CD8-positive, alpha-beta T cell (primary cell): ENCODE measurements at regions of chr5 and their contacts with region 1.

Region 1: GRCh38 chr5:132495667-132496190 is 5.2 kb upstream of the IRF1 start:
- DNase-seq: peak in 8 of 9 experiments; percentile 54 to 86 (median 70)
- ATAC-seq: peak; percentile 32
- H3K4me3 ChIP-seq: peak overlapping the region; percentile 67 to 86
- H3K4me3 Mint-ChIP-seq: peak overlapping the region; percentile 97
- H3K27ac ChIP-seq: peak overlapping the region; percentile 68 to 86
- H3K27ac Mint-ChIP-seq: peak overlapping the region; percentile 94
- H3K4me1 ChIP-seq: peaks cover 69% of the 10 kb centered on the region
- H3K4me1 Mint-ChIP-seq: peaks cover 69% of the 10 kb centered on the region
- H3K27me3 ChIP-seq: no peaks in the 10 kb centered on the region
- H3K27me3 Mint-ChIP-seq: no peaks in the 10 kb centered on the region
- CTCF ChIP-seq: no peak

Region 2: DNA sequence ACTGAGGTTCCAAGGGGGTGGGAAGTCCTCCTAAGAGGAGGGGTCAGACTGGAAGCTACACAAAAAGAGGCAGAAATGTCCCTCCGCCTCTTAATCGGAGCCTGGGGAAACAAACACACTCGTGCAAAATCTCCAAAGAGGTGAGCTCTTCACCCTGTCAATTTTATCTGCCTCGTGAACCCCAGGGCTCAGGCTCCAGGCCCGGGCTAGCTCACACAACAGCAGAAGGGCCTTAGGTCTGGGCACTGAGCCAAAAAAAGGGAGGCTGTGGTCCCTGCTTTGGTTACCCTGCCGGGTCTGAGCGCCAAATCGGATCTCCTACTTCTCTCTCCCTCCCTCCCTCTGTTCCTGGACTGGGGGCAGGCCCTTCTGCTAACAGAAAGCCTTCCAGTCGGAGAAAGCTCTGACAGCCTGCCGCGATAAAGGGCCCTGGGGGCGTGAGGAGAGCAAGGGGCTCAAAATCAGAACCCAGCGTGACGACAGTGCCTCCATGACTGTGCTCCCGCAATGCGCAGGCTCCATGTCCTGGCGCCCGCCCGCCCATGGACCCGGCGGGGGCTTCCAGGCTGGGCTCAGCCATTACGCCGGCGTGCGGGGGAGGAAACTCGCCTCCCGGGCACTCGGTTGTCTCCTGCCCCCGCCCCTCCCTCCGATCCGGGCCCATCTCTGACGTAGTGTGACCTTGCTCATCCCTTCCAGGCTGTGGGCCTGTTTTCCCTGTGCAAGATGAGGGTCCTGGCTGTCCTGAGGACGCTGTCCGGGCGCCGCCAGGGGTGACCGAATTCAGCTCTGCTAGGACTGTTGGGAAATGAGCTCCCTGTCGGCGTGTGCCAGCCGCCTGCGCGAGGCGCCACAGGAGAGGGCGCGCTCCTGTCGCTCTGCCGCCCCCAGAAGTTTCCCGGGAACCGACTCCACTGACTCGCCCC is 202.4 kb before region 1 on chr5:
- CTCF ChIA-PET with region 1: no interaction called
- POLR2A ChIA-PET with region 1: interaction called, 3 read pairs
- intact Hi-C with region 1: loop called in 1 of 2 experiments (anchors 5 kb)
- DNase-seq: peak; percentile 24 to 82 (median 63)
- ATAC-seq: peak; percentile 53
- H3K4me3 ChIP-seq: peak overlapping the region; percentile 76 to 87
- H3K4me3 Mint-ChIP-seq: peak overlapping the region; percentile 90
- H3K27ac ChIP-seq: peak overlapping the region; percentile 42 to 50
- H3K27ac Mint-ChIP-seq: peak overlapping the region; percentile 77
- H3K4me1 ChIP-seq: peaks cover 14% of the 10 kb centered on the region
- H3K4me1 Mint-ChIP-seq: peaks cover 16% of the 10 kb centered on the region
- H3K27me3 ChIP-seq: peaks cover 0 to 2% of the 10 kb centered on the region in 2 experiments
- H3K27me3 Mint-ChIP-seq: peaks cover 15% of the 10 kb centered on the region
- CTCF ChIP-seq: no peak

Region 3: GRCh38 chr5:132410451-132411381 is 85.0 kb before region 1 on chr5:
- CTCF ChIA-PET with region 1: interaction called, 36 read pairs
- POLR2A ChIA-PET with region 1: interaction called, 105 read pairs
- intact Hi-C with region 1: loop called (anchors 1 to 2 kb)
- DNase-seq: peak; percentile 61 to 93 (median 80)
- ATAC-seq: peak; percentile 66
- H3K4me3 ChIP-seq: peak overlapping the region; percentile 73 to 94
- H3K4me3 Mint-ChIP-seq: peak overlapping the region; percentile 95
- H3K27ac ChIP-seq: peak overlapping the region; percentile 96 to 98
- H3K27ac Mint-ChIP-seq: peak overlapping the region; percentile 98
- H3K4me1 ChIP-seq: peaks cover 79% of the 10 kb centered on the region
- H3K4me1 Mint-ChIP-seq: peaks cover 80% of the 10 kb centered on the region
- H3K27me3 ChIP-seq: no peaks in the 10 kb centered on the region
- H3K27me3 Mint-ChIP-seq: no peaks in the 10 kb centered on the region
- CTCF ChIP-seq: peak; percentile 44

Region 4: DNA sequence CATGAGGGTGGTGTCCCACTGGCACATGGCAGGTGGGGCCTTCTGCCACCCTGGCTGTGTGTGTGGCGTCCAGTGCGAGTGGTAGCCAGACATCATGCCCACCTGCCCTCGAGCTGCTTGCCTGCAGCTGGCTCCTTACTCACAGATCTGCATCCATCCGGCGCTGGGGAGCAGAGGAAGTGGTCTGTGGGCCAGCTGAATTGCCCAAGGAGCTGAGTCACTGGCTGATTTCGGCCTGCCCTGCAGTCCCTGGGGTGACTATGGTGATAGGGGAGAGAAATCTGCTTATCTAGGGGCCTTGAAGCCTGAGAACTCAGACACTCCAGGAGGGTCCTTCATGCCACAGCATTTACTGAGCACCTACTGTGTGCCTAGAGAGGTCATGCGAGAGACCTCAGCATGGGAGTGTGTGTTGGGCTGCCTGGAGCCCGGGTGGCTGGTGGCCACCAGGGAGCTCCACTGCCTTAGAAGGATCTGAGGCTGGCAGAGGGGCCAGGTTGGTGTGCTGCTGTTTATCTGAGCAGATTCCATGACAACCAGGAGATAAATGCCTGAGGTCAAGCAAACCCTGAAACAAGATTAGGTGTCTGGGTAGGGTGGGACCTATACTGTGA is 69.1 kb before region 1 on chr5:
- CTCF ChIA-PET with region 1: interaction called, 73 read pairs
- POLR2A ChIA-PET with region 1: interaction called, 136 read pairs
- intact Hi-C with region 1: no loop called
- DNase-seq: peak in 8 of 9 experiments; percentile 52 to 85 (median 66)
- ATAC-seq: peak; percentile 13
- H3K4me3 ChIP-seq: peak overlapping the region; percentile 17 to 31
- H3K4me3 Mint-ChIP-seq: peak overlapping the region; percentile 71
- H3K27ac ChIP-seq: peak overlapping the region; percentile 77 to 98
- H3K27ac Mint-ChIP-seq: peak overlapping the region; percentile 97
- H3K4me1 ChIP-seq: peaks cover 99% of the 10 kb centered on the region
- H3K4me1 Mint-ChIP-seq: peaks cover 95% of the 10 kb centered on the region
- H3K27me3 ChIP-seq: no peaks in the 10 kb centered on the region
- H3K27me3 Mint-ChIP-seq: no peaks in the 10 kb centered on the region
- CTCF ChIP-seq: no peak

Region 5: GRCh38 chr5:132466433-132467286 is 29.1 kb before region 1 on chr5:
- CTCF ChIA-PET with region 1: interaction called, 65 read pairs
- POLR2A ChIA-PET with region 1: interaction called, 391 read pairs
- intact Hi-C with region 1: no loop called
- DNase-seq: peak; percentile 53 to 92 (median 74)
- ATAC-seq: peak; percentile 63
- H3K4me3 ChIP-seq: peak overlapping the region; percentile 25 to 28
- H3K4me3 Mint-ChIP-seq: peak overlapping the region; percentile 68
- H3K27ac ChIP-seq: peak overlapping the region; percentile 51 to 85
- H3K27ac Mint-ChIP-seq: peak overlapping the region; percentile 95
- H3K4me1 ChIP-seq: peaks cover 88% of the 10 kb centered on the region
- H3K4me1 Mint-ChIP-seq: peaks cover 96% of the 10 kb centered on the region
- H3K27me3 ChIP-seq: no peaks in the 10 kb centered on the region
- H3K27me3 Mint-ChIP-seq: no peaks in the 10 kb centered on the region
- CTCF ChIP-seq: no peak

Region 6: GRCh38 chr5:132479111-132479951 is 16.4 kb before region 1 on chr5:
- CTCF ChIA-PET with region 1: interaction called, 65 read pairs
- POLR2A ChIA-PET with region 1: interaction called, 391 read pairs
- intact Hi-C with region 1: loop called in 1 of 2 experiments (anchors 1 kb)
- DNase-seq: peak in 3 of 9 experiments; percentile 27 to 55 (median 35)
- ATAC-seq: no peak
- H3K4me3 ChIP-seq: no peak overlapping the region
- H3K4me3 Mint-ChIP-seq: peak overlapping the region; percentile 8
- H3K27ac ChIP-seq: peak overlapping the region in 1 of 2 experiments; percentile 93
- H3K27ac Mint-ChIP-seq: peak overlapping the region; percentile 91
- H3K4me1 ChIP-seq: peaks cover 66% of the 10 kb centered on the region
- H3K4me1 Mint-ChIP-seq: peaks cover 72% of the 10 kb centered on the region
- H3K27me3 ChIP-seq: no peaks in the 10 kb centered on the region
- H3K27me3 Mint-ChIP-seq: no peaks in the 10 kb centered on the region
- CTCF ChIP-seq: no peak

Region 7: GRCh38 chr5:132556763-132557477 is 61.2 kb after region 1 on chr5 and contains the start of gene RAD50:
- CTCF ChIA-PET with region 1: interaction called, 3 read pairs
- POLR2A ChIA-PET with region 1: interaction called, 6 read pairs
- intact Hi-C with region 1: loop called in 1 of 2 experiments (anchors 5 kb)
- DNase-seq: peak; percentile 83 to 96 (median 91)
- ATAC-seq: peak; percentile 95
- H3K4me3 ChIP-seq: peak within 1 kb of the TSS; percentile 62 to 97
- H3K4me3 Mint-ChIP-seq: peak within 1 kb of the TSS; percentile 98
- H3K27ac ChIP-seq: peak within 1 kb of the TSS; percentile 68 to 91
- H3K27ac Mint-ChIP-seq: peak within 1 kb of the TSS; percentile 98
- H3K4me1 ChIP-seq: peaks cover 21% of the 10 kb centered on the region
- H3K4me1 Mint-ChIP-seq: peaks cover 28% of the 10 kb centered on the region
- H3K27me3 ChIP-seq: no peaks in the 10 kb centered on the region
- H3K27me3 Mint-ChIP-seq: no peaks in the 10 kb centered on the region
- CTCF ChIP-seq: no peak
- total RNA-seq, gene RAD50: 8.0 to 8.7 TPM

Region 8: DNA sequence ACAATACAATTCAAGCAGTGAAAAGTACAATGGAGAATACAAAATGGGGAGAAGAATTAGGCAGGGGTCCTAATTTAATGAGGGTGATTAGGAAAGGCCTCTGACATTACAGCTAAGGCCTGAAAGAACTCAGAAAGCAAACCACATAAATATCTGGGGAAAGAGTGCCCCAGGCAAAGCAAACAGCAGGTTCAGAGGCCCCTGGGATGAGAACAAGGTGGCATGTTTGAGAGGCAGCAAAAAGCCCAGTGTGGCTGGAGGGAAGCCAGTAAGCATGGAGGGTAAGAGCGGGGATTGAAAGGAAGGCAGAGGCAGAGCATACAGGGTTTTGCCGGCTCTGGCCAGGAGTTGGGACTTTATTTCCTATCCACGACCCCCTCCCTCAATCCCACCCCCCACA is 1542.4 kb after region 1 on chr5:
- CTCF ChIA-PET with region 1: no interaction called
- POLR2A ChIA-PET with region 1: no interaction called
- intact Hi-C with region 1: no loop called
- DNase-seq: no peak
- ATAC-seq: no peak
- H3K4me3 ChIP-seq: no peak overlapping the region
- H3K4me3 Mint-ChIP-seq: no peak overlapping the region
- H3K27ac ChIP-seq: no peak overlapping the region
- H3K27ac Mint-ChIP-seq: peak overlapping the region; percentile 37
- H3K4me1 ChIP-seq: peaks cover 41% of the 10 kb centered on the region
- H3K4me1 Mint-ChIP-seq: peaks cover 48% of the 10 kb centered on the region
- H3K27me3 ChIP-seq: no peaks in the 10 kb centered on the region
- H3K27me3 Mint-ChIP-seq: no peaks in the 10 kb centered on the region
- CTCF ChIP-seq: no peak